ENCODE measurements at regions of chr11 and their contacts with region 1.

Region 1: GRCh38 chr11:71240865-71241691 is 11.3 kb downstream of the SHANK2 start:
- DNase-seq: peak; percentile 93
- H3K4me3 ChIP-seq: peak overlapping the region; percentile 11
- H3K27ac ChIP-seq: peak overlapping the region; percentile 42
- H3K4me1 ChIP-seq: peaks cover 16% of the 10 kb centered on the region
- H3K27me3 ChIP-seq: no peaks in the 10 kb centered on the region
- CTCF ChIP-seq: no peak

Region 2: GRCh38 chr11:71210861-71211260 is 30.2 kb before region 1 on chr11:
- CTCF ChIA-PET with region 1: no interaction called
- POLR2A ChIA-PET with region 1: interaction called, 24 read pairs
- intact Hi-C with region 1: no loop called
- DNase-seq: no peak
- H3K4me3 ChIP-seq: no peak overlapping the region
- H3K27ac ChIP-seq: no peak overlapping the region
- H3K4me1 ChIP-seq: no peaks in the 10 kb centered on the region
- H3K27me3 ChIP-seq: peaks cover 10% of the 10 kb centered on the region
- CTCF ChIP-seq: no peak

Region 3: DNA sequence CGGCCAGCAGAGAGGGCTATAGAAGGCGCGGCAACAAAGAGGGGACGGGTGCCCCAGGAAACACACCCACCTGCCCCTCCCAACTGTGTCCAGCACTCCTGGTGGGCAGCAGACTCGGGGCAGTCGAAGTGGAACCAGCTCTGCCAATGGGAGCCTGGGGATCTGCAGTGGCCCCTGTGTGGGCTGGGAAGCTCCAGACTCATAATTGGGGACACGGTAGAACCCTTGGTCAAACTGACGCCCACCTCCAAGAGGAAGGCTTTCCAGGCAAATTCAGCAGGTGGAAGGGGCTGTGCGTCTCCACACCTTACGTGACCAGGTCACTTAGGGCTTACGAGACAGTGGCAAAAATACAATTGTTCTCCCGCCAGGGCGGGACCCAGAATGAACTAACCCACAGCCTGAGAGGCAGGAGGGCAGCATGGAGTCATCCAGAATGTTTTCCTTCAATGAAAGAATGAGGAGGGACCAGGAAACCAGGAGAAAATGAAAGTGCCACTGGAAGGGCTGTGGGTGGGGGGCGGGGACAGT is 64.4 kb after region 1 on chr11:
- CTCF ChIA-PET with region 1: no interaction called
- POLR2A ChIA-PET with region 1: no interaction called
- intact Hi-C with region 1: no loop called
- DNase-seq: no peak
- H3K4me3 ChIP-seq: no peak overlapping the region
- H3K27ac ChIP-seq: no peak overlapping the region
- H3K4me1 ChIP-seq: no peaks in the 10 kb centered on the region
- H3K27me3 ChIP-seq: peaks cover 1% of the 10 kb centered on the region
- CTCF ChIP-seq: no peak

Measured in A673 (cell line).